Activated B cell treated with CpG ODN at 0.5 μM for 24 hours (primary cell): ENCODE measurements at regions of chr20 and their contacts with region 1.

Region 1: DNA sequence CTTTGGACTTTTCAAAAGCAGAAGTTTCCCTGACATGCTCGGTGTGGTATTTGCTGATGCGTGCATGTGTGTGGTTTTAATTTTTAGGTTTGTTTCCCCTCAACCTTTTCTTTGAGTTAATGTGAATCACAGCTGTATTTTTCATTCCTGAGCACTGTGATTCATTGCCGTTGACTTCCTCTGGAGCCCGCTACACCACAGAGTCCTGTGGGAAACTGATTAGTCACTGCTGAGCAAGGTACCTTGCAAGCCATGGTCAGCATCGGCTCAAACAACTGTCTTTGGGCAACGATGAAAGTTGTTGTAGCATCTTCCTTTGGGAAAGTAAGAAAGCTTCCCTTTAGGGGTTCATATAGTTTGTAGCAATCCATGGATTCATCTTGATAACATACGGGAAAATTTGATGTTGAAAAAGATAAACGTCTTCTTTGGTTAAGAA is 57.5 kb downstream of the RIN2 start:
- DNase-seq: peak; percentile 31
- ATAC-seq: peak; percentile 91
- H3K4me3 Mint-ChIP-seq: peak overlapping the region; percentile 72
- H3K27ac Mint-ChIP-seq: peak overlapping the region; percentile 78
- H3K4me1 Mint-ChIP-seq: peaks cover 70% of the 10 kb centered on the region
- H3K27me3 Mint-ChIP-seq: no peaks in the 10 kb centered on the region
- CTCF ChIP-seq: no peak

Region 2: DNA sequence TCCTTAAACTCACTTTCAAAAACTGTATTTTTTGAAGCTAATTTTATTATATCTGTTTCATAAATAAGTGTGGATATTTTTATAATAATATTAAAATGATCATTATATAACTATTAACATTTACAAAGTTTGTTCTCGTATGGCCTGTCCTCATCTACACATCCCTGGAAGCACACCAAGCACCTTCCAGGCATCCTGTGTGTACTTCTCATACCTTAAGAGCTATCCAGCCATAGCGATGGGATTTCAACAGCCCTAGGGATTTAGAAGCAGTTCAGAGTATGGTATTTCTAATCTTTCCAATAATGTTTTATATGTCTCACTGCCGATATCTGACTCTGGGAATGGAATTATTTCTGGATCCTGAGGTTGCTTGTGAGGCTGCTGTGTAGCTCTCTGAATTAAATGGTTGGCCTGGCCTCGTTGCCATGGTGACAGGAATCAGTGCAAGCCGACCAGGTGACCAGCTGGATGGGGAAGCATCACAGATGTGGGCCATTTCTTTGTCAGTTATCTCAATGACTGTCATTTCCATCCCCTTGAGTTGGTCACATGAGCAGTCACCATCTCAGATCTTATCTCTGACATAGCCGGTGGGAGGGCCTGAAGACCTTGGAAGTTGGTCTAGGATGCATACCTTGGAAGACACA is 322.8 kb before region 1 on chr20:
- CTCF ChIA-PET with region 1: no interaction called
- POLR2A ChIA-PET with region 1: no interaction called
- intact Hi-C with region 1: no loop called
- DNase-seq: no peak
- ATAC-seq: no peak
- H3K4me3 Mint-ChIP-seq: no peak overlapping the region
- H3K27ac Mint-ChIP-seq: no peak overlapping the region
- H3K4me1 Mint-ChIP-seq: no peaks in the 10 kb centered on the region
- H3K27me3 Mint-ChIP-seq: peaks cover 2% of the 10 kb centered on the region
- CTCF ChIP-seq: no peak

Region 3: DNA sequence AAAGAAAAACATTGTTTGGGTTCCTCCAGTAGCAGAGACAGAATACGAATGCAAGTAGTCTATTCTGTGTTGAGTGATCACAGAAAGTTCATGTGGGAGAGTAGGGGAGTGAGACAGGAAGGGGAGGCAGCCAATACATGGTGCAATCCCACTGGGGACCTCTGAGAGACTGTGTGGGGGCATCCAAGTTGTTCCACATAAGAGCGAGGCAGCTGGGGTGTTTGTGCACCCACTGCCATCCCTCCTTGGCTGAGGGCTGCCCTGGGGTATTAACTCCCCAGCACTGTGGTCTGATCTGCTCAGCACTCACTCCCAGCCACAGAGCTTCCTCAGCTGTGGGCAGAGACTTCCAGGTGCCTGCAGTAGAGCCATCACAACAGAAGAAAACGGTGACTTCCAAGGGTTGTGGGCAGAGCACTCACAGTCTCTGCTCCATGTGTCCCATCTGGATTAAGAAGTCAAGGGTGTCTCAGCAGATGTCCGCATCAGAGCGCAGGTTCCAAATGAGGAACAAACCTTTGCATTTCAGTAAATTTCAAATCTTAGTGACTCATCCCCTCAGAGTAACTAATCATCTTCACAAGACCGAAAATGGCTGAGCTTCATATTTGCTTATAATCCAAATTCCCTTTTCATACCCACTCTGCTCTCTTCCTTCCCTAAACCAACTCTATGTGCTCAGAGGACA is 99.7 kb after region 1 on chr20:
- CTCF ChIA-PET with region 1: no interaction called
- POLR2A ChIA-PET with region 1: no interaction called
- intact Hi-C with region 1: loop called (anchors 1 kb)
- DNase-seq: peak; percentile 28
- ATAC-seq: peak; percentile 78
- H3K4me3 Mint-ChIP-seq: peak overlapping the region; percentile 29
- H3K27ac Mint-ChIP-seq: peak overlapping the region; percentile 87
- H3K4me1 Mint-ChIP-seq: peaks cover 65% of the 10 kb centered on the region
- H3K27me3 Mint-ChIP-seq: no peaks in the 10 kb centered on the region
- CTCF ChIP-seq: no peak